Caco-2 (cell line): ENCODE measurements at regions of chrX and their contacts with region 1.

Region 1: GRCh38 chrX:134377537-134377936 is 82.4 kb upstream of the HPRT1 start:
- DNase-seq: peak; percentile 22 to 33
- H3K4me3 ChIP-seq: no peak overlapping the region
- H3K4me3 Mint-ChIP-seq: no peak overlapping the region
- H3K27ac Mint-ChIP-seq: no peak overlapping the region
- H3K4me1 ChIP-seq: no peaks in the 10 kb centered on the region
- H3K4me1 Mint-ChIP-seq: no peaks in the 10 kb centered on the region
- H3K27me3 ChIP-seq: no peaks in the 10 kb centered on the region
- H3K27me3 Mint-ChIP-seq: no peaks in the 10 kb centered on the region
- CTCF ChIP-seq: peak; percentile 12 to 40

Region 2: DNA sequence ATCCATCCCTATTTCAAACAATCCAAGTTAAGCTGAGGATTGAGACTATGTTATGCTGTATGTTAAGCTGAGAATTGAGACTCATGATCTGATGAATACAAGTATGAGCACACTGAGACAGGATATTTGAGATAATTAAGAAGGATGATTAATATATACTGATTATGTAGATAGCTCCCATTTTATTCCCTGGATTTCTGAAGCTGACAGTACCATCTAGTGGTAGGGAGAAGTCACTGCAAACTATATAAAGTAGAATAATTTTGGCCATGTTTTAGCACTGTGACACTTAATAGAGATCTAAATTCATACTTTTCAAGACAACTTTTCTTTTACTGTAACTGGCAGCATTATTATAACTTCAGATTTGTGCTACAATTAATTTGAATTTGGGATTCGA is 18.6 kb after region 1 on chrX:
- CTCF ChIA-PET with region 1: no interaction called
- POLR2A ChIA-PET with region 1: no interaction called
- intact Hi-C with region 1: loop called (anchors 1 kb)
- DNase-seq: no peak
- H3K4me3 ChIP-seq: no peak overlapping the region
- H3K4me3 Mint-ChIP-seq: no peak overlapping the region
- H3K27ac Mint-ChIP-seq: no peak overlapping the region
- H3K4me1 ChIP-seq: no peaks in the 10 kb centered on the region
- H3K4me1 Mint-ChIP-seq: no peaks in the 10 kb centered on the region
- H3K27me3 ChIP-seq: no peaks in the 10 kb centered on the region
- H3K27me3 Mint-ChIP-seq: no peaks in the 10 kb centered on the region
- CTCF ChIP-seq: peak; percentile 30 to 38